ENCODE measurements at regions of chr19 and their contacts with region 1.

Region 1: GRCh38 chr19:2503521-2504109 is 27.7 kb downstream of the GADD45B start:
- DNase-seq: peak; percentile 34 to 90 (median 81)
- ATAC-seq: peak; percentile 82
- H3K4me3 ChIP-seq: peak overlapping the region; percentile 28 to 31
- H3K4me3 Mint-ChIP-seq: peak overlapping the region; percentile 63
- H3K27ac ChIP-seq: peak overlapping the region; percentile 67 to 88
- H3K27ac Mint-ChIP-seq: peak overlapping the region; percentile 98
- H3K4me1 ChIP-seq: peaks cover 26% of the 10 kb centered on the region
- H3K4me1 Mint-ChIP-seq: peaks cover 27% of the 10 kb centered on the region
- H3K27me3 ChIP-seq: no peaks in the 10 kb centered on the region
- H3K27me3 Mint-ChIP-seq: no peaks in the 10 kb centered on the region
- CTCF ChIP-seq: no peak

Region 2: DNA sequence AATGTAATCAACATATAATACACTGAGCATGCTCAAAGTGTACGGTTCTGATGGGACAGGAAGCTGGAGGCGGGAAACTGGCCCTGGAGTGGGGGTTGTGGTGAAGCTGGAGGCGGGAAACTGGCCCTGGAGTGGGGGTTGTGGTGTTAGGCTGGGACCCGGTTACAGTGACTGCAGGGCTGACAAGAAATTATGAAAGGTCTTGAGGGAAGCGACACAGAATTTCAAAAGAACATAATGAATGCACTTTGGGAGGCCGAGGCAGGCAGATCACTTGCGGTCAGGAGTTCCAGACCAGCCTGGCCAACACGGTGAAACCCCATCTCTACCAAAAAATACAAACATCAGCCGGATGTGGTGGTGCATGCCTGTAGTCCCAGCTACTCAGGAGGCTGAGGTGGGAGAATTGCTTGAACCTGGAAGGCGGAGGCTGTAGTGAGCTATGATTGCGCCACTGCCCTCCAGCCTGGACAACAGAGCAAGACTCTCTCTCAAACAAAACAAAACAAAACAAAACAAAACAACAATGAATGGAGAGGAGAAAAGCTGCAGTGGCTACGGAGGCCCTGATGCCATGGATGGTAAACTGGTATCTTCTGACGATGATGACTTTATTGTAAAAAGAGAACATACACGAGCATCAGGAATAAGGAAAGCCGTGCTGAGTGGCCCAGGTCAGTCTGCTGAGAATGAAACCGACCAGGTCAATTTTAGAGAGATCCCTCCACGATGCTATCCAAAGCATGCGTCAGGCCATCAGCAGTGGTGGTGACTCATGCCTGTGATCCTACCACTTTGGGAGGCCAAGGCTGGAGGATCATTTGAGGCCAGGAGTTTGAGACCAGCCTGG is 34.2 kb after region 1 on chr19:
- CTCF ChIA-PET with region 1: no interaction called
- POLR2A ChIA-PET with region 1: no interaction called
- intact Hi-C with region 1: loop called in 1 of 2 experiments (anchors 5 kb)
- DNase-seq: no peak
- ATAC-seq: no peak
- H3K4me3 ChIP-seq: no peak overlapping the region
- H3K4me3 Mint-ChIP-seq: no peak overlapping the region
- H3K27ac ChIP-seq: no peak overlapping the region
- H3K27ac Mint-ChIP-seq: no peak overlapping the region
- H3K4me1 ChIP-seq: peaks cover 12% of the 10 kb centered on the region
- H3K4me1 Mint-ChIP-seq: peaks cover 25% of the 10 kb centered on the region
- H3K27me3 ChIP-seq: no peaks in the 10 kb centered on the region
- H3K27me3 Mint-ChIP-seq: no peaks in the 10 kb centered on the region
- CTCF ChIP-seq: no peak

Measured in CD8-positive, alpha-beta T cell (primary cell).